Common myeloid progenitor, CD34-positive (primary cell): ENCODE measurements at regions of chr11 and their contacts with region 1.

Region 1: DNA sequence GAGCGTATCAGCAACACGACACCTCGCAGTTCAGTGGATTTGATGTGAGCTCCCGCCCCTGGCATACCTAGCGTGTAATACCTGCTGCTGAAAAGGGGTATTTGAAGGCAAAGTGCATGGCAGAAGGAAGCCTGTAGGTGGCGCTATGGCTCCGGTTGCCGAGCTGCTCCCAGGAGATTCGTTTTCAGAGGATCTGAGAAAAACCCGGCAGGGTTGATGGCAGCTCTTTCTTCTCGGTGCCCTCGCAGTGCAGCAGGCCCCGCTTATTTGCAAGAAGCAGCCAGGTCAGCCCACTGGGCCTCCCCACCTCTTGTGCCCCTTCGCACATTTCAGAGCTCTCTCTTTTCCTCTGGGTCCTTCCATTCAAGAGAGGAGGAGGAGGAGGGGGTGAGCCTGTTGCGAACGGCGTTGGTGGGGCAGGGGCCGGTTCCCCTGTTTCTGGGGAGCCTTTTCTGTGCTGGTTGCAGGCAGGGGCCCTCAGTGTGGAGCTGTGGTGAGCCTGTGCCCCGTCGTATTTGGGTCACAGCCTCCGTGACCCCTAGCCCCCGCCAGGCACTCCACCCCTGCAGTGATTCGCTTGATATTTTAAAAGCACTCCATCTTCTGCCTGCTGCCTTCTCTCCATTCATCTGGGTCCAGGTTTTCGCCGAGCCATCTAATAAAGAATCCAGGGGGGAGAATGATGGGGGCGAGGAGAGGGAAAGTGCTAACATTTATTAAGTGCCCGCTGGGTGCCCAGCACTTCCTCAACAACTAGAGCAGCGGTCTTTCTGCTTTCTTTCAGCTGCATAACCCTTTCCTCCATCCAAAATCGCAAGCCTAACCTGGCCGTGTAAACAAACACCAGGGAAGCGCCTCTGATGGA is 85.3 kb upstream of the SYT13 start:
- DNase-seq: peak; percentile 72 to 84 (median 80)
- H3K4me3 ChIP-seq: peak overlapping the region in 2 of 7 experiments; percentile 0 to 42
- H3K27ac ChIP-seq: no peak overlapping the region
- H3K4me1 ChIP-seq: peaks cover 2 to 21% (median 13%) of the 10 kb centered on the region in 4 experiments
- H3K27me3 ChIP-seq: peaks cover 2 to 55% (median 43%) of the 10 kb centered on the region in 5 experiments

Region 2: DNA sequence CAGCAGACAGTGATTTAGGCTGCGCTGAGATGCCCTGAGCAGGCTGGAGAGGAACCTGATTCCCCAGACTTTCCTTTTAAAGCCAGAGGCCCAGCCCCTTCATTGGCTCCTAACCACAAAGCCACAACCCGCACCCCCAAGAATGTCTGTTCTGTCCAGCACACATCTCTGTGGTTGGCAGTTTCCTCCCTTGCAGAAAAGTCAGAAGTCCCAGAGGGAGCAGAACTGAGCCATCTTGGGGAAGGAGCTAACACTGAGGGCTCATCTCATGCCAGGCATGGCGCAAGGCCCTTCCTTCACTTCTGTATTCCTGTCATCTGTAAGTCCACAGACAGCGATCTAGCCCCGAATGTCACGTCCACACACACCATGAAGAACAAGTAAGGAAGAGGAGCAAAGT is 11.7 kb after region 1 on chr11:
- CTCF ChIA-PET with region 1: interaction called, 57 read pairs
- POLR2A ChIA-PET with region 1: no interaction called
- DNase-seq: peak; percentile 71 to 85 (median 79)
- H3K4me3 ChIP-seq: peak overlapping the region in 2 of 7 experiments; percentile 23 to 37
- H3K27ac ChIP-seq: no peak overlapping the region
- H3K4me1 ChIP-seq: peaks cover 6 to 23% (median 17%) of the 10 kb centered on the region in 4 experiments
- H3K27me3 ChIP-seq: peaks cover 0 to 71% (median 31%) of the 10 kb centered on the region in 5 experiments

Region 3: GRCh38 chr11:45400591-45400990 is 29.1 kb after region 1 on chr11:
- CTCF ChIA-PET with region 1: interaction called, 17 read pairs
- POLR2A ChIA-PET with region 1: no interaction called
- DNase-seq: no peak
- H3K4me3 ChIP-seq: no peak overlapping the region
- H3K27ac ChIP-seq: no peak overlapping the region
- H3K4me1 ChIP-seq: no peaks in the 10 kb centered on the region
- H3K27me3 ChIP-seq: peaks cover 0 to 33% (median 19%) of the 10 kb centered on the region in 5 experiments

Region 4: GRCh38 chr11:45655347-45655756 is 283.9 kb after region 1 on chr11:
- CTCF ChIA-PET with region 1: interaction called, 45 read pairs
- POLR2A ChIA-PET with region 1: no interaction called
- DNase-seq: peak; percentile 53 to 68 (median 62)
- H3K4me3 ChIP-seq: no peak overlapping the region
- H3K27ac ChIP-seq: no peak overlapping the region
- H3K4me1 ChIP-seq: peaks cover 0 to 17% (median 8%) of the 10 kb centered on the region in 4 experiments
- H3K27me3 ChIP-seq: peaks cover 0 to 57% (median 25%) of the 10 kb centered on the region in 5 experiments

Region 5: DNA sequence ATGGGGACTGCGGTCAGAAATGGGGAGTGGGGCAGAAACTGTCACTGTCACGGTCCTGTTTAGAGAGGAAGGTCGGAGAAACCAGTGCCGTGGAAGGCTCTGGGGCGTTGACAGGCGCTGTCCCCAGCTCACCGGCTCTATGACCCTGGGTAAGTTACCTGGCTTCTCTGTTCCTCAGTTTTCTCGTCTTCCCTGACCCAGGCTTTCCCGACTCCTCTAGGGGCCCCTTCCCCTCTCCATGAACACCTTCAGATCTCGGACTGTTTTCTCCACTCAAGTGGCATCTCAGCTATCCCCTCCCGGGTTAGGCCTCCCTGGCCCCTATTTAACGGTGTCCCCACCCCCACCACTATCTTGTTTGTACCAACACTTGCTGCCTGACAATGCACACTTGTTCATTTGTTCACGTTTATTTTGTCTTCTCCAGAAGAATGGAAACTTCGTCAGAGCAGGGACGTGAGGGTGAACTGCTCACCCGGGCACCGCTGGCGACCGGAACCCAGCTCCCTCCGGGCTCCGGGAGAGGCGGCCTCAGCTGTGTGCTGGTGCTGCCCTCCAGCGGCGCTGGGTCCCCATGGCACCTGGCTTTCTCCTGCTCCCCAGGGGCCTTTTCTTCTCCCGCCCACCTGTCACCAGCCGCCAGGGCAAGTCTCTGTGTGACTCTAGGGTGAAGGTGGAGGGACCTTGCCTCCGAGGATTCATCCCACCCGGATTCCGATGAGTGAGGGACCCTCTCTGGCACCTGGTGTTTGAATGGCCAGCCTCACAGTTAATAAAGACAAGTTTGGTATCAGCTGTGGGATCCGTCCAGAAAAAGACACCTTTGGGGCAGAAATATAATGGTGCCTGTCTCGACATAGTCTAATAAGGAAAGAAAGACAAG is 400.3 kb after region 1 on chr11:
- CTCF ChIA-PET with region 1: interaction called, 28 read pairs
- POLR2A ChIA-PET with region 1: no interaction called
- DNase-seq: peak; percentile 74 to 77 (median 75)
- H3K4me3 ChIP-seq: peak overlapping the region; percentile 30 to 86 (median 71)
- H3K27ac ChIP-seq: peak overlapping the region in 1 of 2 experiments; percentile 38
- H3K4me1 ChIP-seq: peaks cover 0 to 11% (median 10%) of the 10 kb centered on the region in 4 experiments
- H3K27me3 ChIP-seq: peaks cover 0 to 26% (median 7%) of the 10 kb centered on the region in 5 experiments